BJ (cell line): ENCODE measurements at regions of chr1 and their contacts with region 1.

Region 1: GRCh38 chr1:32650752-32651460 is at the start of gene RBBP4:
- DNase-seq: peak; percentile 75
- H3K4me3 ChIP-seq: peak within 1 kb of the TSS; percentile 87
- H3K27me3 ChIP-seq: no peaks in the 10 kb centered on the region
- CTCF ChIP-seq: no peak
- polyA plus RNA-seq, gene RBBP4: 67.0 and 102 TPM in 2 replicates

Region 2: GRCh38 chr1:32580348-32581017 is 70.4 kb before region 1 on chr1:
- CTCF ChIA-PET with region 1: no interaction called
- POLR2A ChIA-PET with region 1: no interaction called
- DNase-seq: no peak
- H3K4me3 ChIP-seq: no peak overlapping the region
- H3K27me3 ChIP-seq: no peaks in the 10 kb centered on the region
- CTCF ChIP-seq: no peak

Region 3: DNA sequence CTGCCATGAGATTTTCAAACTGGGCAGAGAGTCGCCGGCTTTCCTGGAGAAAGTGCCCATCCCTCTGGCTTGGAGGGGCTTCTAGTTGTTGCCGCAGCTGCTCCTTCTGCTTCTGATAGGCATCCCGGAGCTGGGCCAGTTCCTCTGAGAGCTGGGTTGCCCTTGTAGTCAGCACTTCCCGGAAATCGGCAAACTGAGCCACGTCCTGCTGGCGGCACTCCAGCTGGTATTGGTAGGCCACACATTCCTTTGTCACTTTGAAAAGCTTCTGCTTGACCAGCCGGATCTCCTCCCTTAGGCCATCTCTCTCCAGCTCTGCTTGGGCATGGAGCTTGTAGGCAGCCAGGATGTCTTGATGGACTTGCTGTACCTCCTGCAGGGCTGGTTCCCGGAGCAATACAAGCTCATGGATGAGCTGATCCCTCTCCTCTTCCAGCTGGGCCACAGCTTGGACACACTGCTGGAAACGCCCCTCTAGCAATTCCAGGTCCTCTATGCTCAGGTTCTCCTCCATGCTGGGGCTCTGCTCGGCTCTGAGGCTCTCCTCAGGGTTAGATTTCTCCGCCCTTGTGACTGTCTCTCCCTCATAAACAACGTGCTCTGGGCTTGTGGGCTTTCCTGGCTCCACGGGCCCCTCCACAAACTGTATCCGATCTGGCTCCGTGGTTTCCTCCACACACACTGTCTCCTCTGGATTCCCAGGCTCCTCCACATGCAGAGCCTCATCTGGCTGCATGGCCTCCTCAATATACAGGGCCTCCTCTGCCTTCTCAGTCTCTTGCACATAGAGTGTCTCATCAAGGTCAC is 44.4 kb after region 1 on chr1:
- CTCF ChIA-PET with region 1: no interaction called
- POLR2A ChIA-PET with region 1: interaction called, 14 read pairs
- DNase-seq: no peak
- H3K4me3 ChIP-seq: no peak overlapping the region
- H3K27me3 ChIP-seq: no peaks in the 10 kb centered on the region
- CTCF ChIP-seq: no peak